ENCODE measurements at regions of chr16 and their contacts with region 1.

Region 1: DNA sequence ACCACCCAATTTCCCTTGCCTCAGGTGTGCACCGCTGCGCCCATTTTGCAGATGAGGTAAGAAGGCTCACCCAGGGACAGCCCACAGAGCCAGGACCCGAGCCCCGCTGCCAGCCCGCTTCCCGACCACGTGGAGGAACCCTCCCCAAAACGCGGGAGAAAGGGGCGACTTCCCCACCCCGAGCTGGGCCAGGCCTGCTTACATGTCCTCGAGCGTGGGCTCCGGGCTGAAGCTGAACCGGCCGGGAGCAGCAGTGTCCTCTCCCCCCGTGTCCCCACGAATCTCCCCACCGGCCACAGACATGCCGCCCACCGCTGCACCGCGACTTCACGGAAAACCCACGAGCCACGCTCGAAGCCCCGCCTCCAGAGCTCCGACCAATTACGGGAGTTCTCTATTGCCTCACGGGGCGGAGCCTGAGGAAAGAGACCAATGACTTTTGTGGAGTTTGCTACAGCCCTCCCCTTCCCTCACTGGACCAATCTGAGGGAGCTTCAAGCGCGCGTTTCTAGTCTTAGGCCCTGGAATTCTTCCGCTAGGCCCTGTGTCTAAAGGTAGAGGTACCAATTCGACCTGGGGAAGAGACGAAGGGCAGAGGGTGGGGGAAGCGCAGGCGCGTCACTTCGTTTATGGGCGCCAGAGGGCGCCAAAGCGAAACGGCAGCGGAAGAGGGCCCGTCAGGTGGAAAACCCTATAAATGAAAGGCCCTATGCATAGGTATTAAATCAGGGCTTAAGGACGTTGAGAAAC is at the start of gene DCTPP1:
- DNase-seq: peak; percentile 96 to 99 (median 98)
- ATAC-seq: peak; percentile 99
- H3K4me3 ChIP-seq: peak within 1 kb of the TSS; percentile 42 to 52
- H3K27ac ChIP-seq: peak within 1 kb of the TSS; percentile 45 to 76 (median 60)
- H3K4me1 ChIP-seq: peaks cover 23% of the 10 kb centered on the region
- H3K27me3 ChIP-seq: no peaks in the 10 kb centered on the region
- CTCF ChIP-seq: peak; percentile 62 to 98 (median 97)
- POLR2A ChIP-seq: peak in 2 of 3 donors; percentile 68 to 70
- total RNA-seq, gene DCTPP1: 3.3 to 15.0 TPM

Region 2: DNA sequence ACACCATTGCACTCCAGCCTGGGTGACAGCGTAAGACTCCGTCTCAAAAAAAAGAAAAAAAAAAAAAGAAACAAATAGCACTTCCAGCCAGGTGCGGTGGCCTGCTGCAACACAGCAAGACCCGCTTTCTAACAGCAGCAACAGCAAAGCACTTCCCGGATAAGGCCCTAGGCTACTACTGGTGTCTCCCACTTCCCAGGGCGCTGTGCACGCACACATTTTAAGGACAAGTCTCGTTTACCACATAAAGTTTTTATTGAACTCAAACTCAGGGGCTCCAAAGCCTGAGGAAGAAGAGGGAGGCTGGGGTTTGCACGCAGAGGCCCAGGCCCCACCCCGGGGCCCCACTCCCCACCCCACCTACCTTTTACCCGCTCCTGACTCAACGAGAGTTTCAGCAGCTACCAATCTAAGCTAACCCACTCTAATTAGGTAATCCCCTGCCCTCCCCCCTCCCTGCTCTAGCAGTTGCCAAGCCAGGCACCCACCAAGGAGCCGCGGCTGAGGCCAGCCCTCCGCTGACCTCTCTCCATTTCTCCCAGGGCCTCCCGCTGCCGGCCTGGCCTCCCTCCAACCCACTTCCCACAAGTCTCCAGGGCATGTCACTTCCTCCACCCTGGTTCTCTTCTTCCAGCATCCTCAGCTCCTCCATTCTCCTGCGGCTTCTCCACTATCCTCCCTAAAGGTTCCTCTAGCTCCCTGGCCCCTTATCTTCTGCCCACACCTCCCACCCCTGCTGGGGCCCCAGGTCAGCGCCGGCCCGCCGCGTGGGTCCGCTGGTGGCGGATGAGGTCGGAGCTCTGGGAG is 94.1 kb after region 1 on chr16:
- intact Hi-C with region 1: loop called (anchors 5 kb)
- DNase-seq: peak in 1 of 4 donors; percentile 21
- ATAC-seq: no peak
- H3K4me3 ChIP-seq: no peak overlapping the region
- H3K27ac ChIP-seq: no peak overlapping the region
- H3K4me1 ChIP-seq: peaks cover 32% of the 10 kb centered on the region
- H3K27me3 ChIP-seq: no peaks in the 10 kb centered on the region
- CTCF ChIP-seq: no peak
- POLR2A ChIP-seq: no peak

Region 3: GRCh38 chr16:30557957-30558788 is 128.3 kb after region 1 on chr16 and contains the start of gene ZNF764:
- intact Hi-C with region 1: no loop called
- DNase-seq: peak; percentile 98 to 99 (median 99)
- ATAC-seq: peak; percentile 97
- H3K4me3 ChIP-seq: peak within 1 kb of the TSS; percentile 71 to 78
- H3K27ac ChIP-seq: peak within 1 kb of the TSS; percentile 92 to 98 (median 96)
- H3K4me1 ChIP-seq: peaks cover 29% of the 10 kb centered on the region
- H3K27me3 ChIP-seq: no peaks in the 10 kb centered on the region
- CTCF ChIP-seq: peak in 1 of 7 experiments; percentile 31
- POLR2A ChIP-seq: peak; percentile 23 to 69 (median 57)
- total RNA-seq, gene ZNF764: 8.3 to 23.7 TPM